ENCODE measurements at regions of chr3 and their contacts with region 1.

Region 1: DNA sequence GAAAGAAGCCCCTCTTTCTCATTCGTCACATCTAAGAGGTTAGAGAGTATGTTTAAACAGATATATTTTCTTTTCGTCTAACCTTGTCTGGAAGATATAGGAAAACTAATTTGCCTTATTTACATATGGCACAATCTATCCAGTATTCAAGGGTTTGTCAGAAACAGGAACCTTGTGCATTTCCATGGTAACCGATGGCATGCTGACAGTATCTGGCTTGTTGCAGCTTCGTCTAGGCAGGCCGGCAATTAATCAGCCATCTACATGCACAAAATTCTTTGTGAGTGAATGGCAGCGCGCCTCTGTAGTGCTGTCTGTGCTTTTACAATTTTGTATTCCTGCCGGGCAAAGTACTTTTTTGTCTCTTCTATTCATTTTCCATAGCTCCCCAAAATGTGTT is 294.0 kb upstream of the SOX2 start:
- DNase-seq: no peak
- H3K4me3 ChIP-seq: no peak overlapping the region
- H3K27ac ChIP-seq: no peak overlapping the region
- H3K4me1 ChIP-seq: no peaks in the 10 kb centered on the region
- H3K27me3 ChIP-seq: no peaks in the 10 kb centered on the region
- CTCF ChIP-seq: no peak
- POLR2A ChIP-seq: no peak

Region 2: DNA sequence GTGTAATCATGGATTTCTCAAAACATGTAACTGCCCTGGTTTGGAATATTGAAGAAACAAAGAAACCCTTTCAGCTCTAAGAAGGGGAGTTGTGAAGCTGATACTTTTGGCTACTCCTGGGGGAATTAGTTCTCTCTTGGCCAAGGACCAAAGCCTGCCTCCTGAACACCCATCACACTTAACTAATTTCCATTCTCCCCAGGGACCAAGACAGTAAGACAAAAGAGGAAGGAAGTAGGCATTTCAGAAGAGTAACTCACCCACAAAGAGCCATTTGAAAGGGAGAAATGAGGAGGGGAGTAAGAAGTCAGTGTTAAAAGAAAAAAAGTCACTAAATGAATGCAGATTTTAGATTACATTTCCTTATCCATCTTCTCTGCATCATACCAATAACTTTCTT is 34.0 kb before region 1 on chr3:
- intact Hi-C with region 1: no loop called
- DNase-seq: no peak
- H3K4me3 ChIP-seq: no peak overlapping the region
- H3K27ac ChIP-seq: no peak overlapping the region
- H3K4me1 ChIP-seq: no peaks in the 10 kb centered on the region
- H3K27me3 ChIP-seq: no peaks in the 10 kb centered on the region
- CTCF ChIP-seq: no peak
- POLR2A ChIP-seq: no peak

Region 3: GRCh38 chr3:182234881-182235280 is 817.1 kb after region 1 on chr3:
- intact Hi-C with region 1: loop called (anchors 5 kb)
- DNase-seq: no peak
- H3K4me3 ChIP-seq: no peak overlapping the region
- H3K27ac ChIP-seq: no peak overlapping the region
- H3K4me1 ChIP-seq: no peaks in the 10 kb centered on the region
- H3K27me3 ChIP-seq: no peaks in the 10 kb centered on the region
- CTCF ChIP-seq: no peak
- POLR2A ChIP-seq: no peak

Measured in uterus (tissue), 4 donors.